WTC11 (cell line): ENCODE measurements at regions of chr17 and their contacts with region 1.

Region 1: DNA sequence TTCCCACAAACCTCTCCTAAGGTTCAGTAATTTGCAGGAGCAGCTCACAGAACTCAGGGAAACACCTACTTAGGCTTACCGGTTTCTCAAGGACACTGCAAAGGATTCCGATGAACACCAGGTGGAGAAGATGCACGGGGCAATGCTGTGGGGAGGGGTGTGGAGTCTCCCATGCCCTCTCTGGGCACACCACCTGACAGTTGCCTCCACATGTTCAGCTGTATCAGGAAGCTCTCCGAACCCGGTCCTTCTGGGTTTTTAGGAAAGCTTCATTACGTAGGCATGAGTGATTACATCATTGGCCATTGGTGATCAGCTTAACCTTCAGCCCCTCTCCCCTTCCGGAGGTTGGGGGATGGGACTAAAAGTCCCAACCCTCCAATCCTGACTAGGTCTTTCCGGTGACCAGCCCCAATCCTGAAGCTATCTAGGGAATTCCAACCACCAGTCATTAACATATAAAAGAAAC is 21.6 kb downstream of the C17orf58 start:
- DNase-seq: peak; percentile 84
- ATAC-seq: peak; percentile 98
- H3K4me3 Mint-ChIP-seq: peak overlapping the region; percentile 85
- H3K27ac Mint-ChIP-seq: peak overlapping the region; percentile 100
- H3K4me1 Mint-ChIP-seq: peaks cover 30% of the 10 kb centered on the region
- H3K27me3 Mint-ChIP-seq: no peaks in the 10 kb centered on the region
- CTCF ChIP-seq: no peak

Region 2: DNA sequence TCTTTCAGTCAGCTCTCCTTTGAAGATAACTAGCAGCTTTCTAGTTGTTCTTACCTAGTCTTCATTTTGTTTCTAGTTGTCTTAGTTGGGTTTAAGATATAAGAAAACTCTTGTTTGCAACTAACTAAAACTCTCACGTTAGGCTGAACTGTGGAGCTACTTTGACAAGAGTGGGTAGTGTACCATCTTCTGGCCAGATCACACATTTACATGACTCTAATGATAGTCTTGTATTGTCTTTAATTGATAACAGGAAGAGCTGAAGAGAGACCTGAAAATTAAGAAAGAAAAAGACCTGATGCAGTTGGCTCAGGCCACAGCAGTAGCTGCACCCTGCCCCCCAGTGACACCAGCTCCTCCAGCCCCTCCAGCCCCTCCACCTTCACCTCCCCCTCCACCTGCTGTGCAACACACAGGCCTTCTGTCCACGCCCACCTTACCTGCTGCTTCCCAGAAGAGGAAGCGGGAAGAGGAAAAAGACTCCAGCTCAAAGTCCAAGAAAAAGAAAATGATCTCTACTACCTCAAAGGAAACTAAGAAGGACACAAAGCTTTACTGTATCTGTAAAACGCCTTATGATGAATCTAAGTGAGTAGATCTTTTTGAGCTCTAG is 15.2 kb before region 1 on chr17:
- CTCF ChIA-PET with region 1: interaction called, 10 read pairs
- POLR2A ChIA-PET with region 1: interaction called, 9 read pairs
- DNase-seq: peak; percentile 25
- ATAC-seq: peak; percentile 70
- H3K4me3 Mint-ChIP-seq: no peak overlapping the region
- H3K27ac Mint-ChIP-seq: peak overlapping the region; percentile 86
- H3K4me1 Mint-ChIP-seq: peaks cover 11% of the 10 kb centered on the region
- H3K27me3 Mint-ChIP-seq: no peaks in the 10 kb centered on the region
- CTCF ChIP-seq: no peak